WTC11 (cell line): ENCODE measurements at regions of chr7 and their contacts with region 1.

Region 1: DNA sequence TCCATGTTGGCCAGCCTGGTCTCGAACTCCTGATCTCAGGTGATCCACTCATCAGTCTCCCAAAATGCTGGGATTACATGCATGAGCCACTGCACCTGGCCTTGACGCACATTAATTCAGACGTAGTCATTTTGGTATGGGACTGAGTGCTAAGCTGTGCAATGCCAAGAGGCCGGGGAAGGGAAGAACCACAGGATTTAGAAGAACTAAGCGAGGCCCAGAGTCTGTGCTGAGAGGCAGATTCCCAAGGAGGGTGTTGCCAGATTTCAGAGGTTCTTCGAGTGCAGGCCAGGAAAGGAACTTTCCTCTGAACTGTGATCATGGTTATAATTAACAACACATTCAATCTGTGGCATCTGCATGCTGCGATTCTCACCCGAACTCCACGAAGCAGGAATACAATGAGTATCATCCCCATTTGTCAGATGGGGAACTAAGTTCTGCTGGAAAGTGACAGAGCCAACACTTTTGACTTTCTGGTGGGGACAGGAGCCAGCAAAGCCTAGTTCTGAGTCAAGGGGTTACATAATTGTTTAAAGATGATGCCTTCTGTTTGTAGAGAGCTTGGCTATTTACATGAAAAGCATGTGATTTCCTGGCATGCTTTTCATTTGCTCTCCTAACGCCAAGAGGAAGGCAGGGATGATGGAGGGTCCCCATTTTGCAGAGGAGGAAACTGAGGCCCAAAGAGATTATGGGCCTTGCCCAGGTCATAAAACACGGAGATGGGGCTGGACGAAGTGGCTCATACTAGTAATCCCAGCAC is 6.2 kb upstream of the ZAN start:
- DNase-seq: no peak
- ATAC-seq: no peak
- H3K4me3 Mint-ChIP-seq: no peak overlapping the region
- H3K27ac Mint-ChIP-seq: no peak overlapping the region
- H3K4me1 Mint-ChIP-seq: peaks cover 3% of the 10 kb centered on the region; the same call in 1 of the 2 replicates
- H3K27me3 Mint-ChIP-seq: peaks cover 14% of the 10 kb centered on the region
- CTCF ChIP-seq: no peak

Region 2: GRCh38 chr7:100148559-100149350 is 578.4 kb before region 1 on chr7 and contains the start of gene LAMTOR4:
- CTCF ChIA-PET with region 1: no interaction called
- POLR2A ChIA-PET with region 1: no interaction called
- DNase-seq: peak; percentile 99
- ATAC-seq: peak; percentile 98
- H3K4me3 Mint-ChIP-seq: peak within 1 kb of the TSS; percentile 99
- H3K27ac Mint-ChIP-seq: peak within 1 kb of the TSS; percentile 99
- H3K4me1 Mint-ChIP-seq: peaks cover 20% of the 10 kb centered on the region
- H3K27me3 Mint-ChIP-seq: peaks cover 3% of the 10 kb centered on the region; the same call in 1 of the 2 replicates
- CTCF ChIP-seq: no peak
- total RNA-seq, gene LAMTOR4: 199 to 235 TPM (median 227 TPM) in 3 replicates

Region 3: GRCh38 chr7:100621554-100621953 is 105.6 kb before region 1 on chr7:
- CTCF ChIA-PET with region 1: no interaction called
- POLR2A ChIA-PET with region 1: no interaction called
- DNase-seq: no peak
- ATAC-seq: no peak
- H3K4me3 Mint-ChIP-seq: no peak overlapping the region
- H3K27ac Mint-ChIP-seq: peak overlapping the region; percentile 6; the same call in 1 of the 2 replicates
- H3K4me1 Mint-ChIP-seq: peaks cover 7% of the 10 kb centered on the region; the same call in 1 of the 2 replicates
- H3K27me3 Mint-ChIP-seq: peaks cover 20% of the 10 kb centered on the region
- CTCF ChIP-seq: no peak

Region 4: DNA sequence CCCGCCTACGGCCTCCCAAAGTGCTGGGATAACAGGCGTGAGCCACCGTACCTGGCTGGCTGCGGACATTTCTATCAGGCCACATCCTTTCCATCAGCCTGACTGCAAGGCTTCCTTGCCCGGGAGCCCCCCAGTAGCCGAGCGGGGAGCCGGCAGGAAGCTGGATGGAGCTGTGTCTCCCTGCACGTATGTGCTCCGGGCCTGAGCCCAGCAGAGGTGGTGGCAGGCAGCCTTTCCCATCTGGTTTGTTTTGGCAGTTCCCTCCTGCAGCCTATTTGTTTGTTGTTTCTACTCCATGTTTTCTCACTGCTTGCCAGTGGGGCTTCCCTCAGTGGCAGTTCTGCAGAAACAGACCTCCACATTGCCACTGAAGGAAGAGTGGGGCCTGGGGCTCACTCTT is 15.8 kb before region 1 on chr7:
- CTCF ChIA-PET with region 1: interaction called, 119 read pairs
- POLR2A ChIA-PET with region 1: no interaction called
- DNase-seq: no peak
- ATAC-seq: no peak
- H3K4me3 Mint-ChIP-seq: no peak overlapping the region
- H3K27ac Mint-ChIP-seq: 0 out of 2 replicates have a peak overlapping the region, but pooled peaks have one; percentile 60
- H3K4me1 Mint-ChIP-seq: peaks cover 8% of the 10 kb centered on the region
- H3K27me3 Mint-ChIP-seq: no peaks in the 10 kb centered on the region
- CTCF ChIP-seq: no peak

Region 5: GRCh38 chr7:100781255-100781654 is 54.1 kb after region 1 on chr7:
- CTCF ChIA-PET with region 1: interaction called, 11 read pairs
- POLR2A ChIA-PET with region 1: no interaction called
- DNase-seq: no peak
- ATAC-seq: peak; percentile 62
- H3K4me3 Mint-ChIP-seq: no peak overlapping the region
- H3K27ac Mint-ChIP-seq: no peak overlapping the region
- H3K4me1 Mint-ChIP-seq: peaks cover 12% of the 10 kb centered on the region
- H3K27me3 Mint-ChIP-seq: peaks cover 5% of the 10 kb centered on the region; the same call in 1 of the 2 replicates
- CTCF ChIP-seq: no peak